ENCODE measurements at regions of chr17 and their contacts with region 1.

Region 1: DNA sequence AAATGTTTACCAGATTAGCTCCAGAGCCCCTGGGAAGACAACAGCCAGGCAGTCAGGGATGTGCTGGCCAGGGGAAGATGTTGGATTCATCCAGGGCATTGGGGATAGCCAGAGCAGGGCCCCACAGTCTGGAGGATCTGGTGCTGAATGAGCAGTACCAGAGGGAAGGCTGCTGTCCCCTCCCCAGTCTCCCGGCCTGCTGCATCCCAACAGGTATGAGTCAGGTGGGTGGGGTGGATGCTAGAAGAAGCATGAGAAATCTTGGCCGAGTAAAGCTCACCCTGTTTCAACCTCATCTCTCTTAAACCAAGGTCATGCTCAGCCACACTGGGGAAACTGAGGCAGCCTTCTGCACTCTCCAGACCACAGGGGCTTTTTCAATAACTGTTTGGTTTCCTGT is 71.9 kb upstream of the SEC14L1 start:
- DNase-seq: no peak
- H3K4me3 ChIP-seq: no peak overlapping the region
- H3K4me3 Mint-ChIP-seq: no peak overlapping the region
- H3K27ac Mint-ChIP-seq: no peak overlapping the region
- H3K4me1 ChIP-seq: no peaks in the 10 kb centered on the region
- H3K4me1 Mint-ChIP-seq: peaks cover 6% of the 10 kb centered on the region
- H3K27me3 ChIP-seq: 0 out of 2 replicates have a peak, but pooled peaks cover 1% of the 10 kb centered on the region
- H3K27me3 Mint-ChIP-seq: peaks cover 13% of the 10 kb centered on the region
- CTCF ChIP-seq: no peak

Region 2: DNA sequence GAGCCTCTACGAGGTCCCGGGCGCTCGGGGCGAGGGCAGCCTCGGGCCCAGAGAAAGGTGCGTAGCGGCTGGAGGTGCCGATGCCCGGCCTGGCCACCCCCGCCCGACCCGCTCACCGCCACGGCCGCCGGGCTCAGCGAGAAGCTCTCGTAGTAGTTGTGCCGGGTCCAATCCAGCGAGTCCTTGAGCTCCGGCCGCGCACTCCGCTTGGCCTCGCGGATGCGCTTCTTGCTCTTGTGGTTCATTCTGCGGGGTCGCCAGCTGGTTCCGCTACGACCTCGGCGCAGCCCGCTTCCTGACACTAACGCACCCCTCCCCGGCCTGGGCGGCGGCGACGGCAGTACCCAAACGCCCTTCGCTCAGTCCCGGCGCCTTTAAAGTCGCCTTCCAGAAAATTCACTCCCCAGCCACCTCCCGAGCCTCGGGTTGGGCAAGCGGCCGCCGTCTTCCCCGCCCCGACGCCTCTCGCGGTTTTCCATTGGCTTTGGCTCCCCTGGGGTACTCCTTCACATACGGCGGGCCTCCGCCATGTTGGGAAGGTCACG is 342.6 kb before region 1 on chr17 and contains the start of gene JMJD6:
- CTCF ChIA-PET with region 1: no interaction called
- POLR2A ChIA-PET with region 1: no interaction called
- intact Hi-C with region 1: loop called (anchors 1 kb)
- DNase-seq: peak; percentile 98
- H3K4me3 ChIP-seq: peak within 1 kb of the TSS; percentile 85
- H3K4me3 Mint-ChIP-seq: peak within 1 kb of the TSS; percentile 90
- H3K27ac Mint-ChIP-seq: peak within 1 kb of the TSS; percentile 84
- H3K4me1 ChIP-seq: peaks cover 7% of the 10 kb centered on the region; the same call in 1 of the 2 replicates
- H3K4me1 Mint-ChIP-seq: no peaks in the 10 kb centered on the region
- H3K27me3 ChIP-seq: no peaks in the 10 kb centered on the region
- H3K27me3 Mint-ChIP-seq: no peaks in the 10 kb centered on the region
- CTCF ChIP-seq: no peak
- total RNA-seq, gene JMJD6: 37.4 and 48.2 TPM in 2 replicates

Region 3: DNA sequence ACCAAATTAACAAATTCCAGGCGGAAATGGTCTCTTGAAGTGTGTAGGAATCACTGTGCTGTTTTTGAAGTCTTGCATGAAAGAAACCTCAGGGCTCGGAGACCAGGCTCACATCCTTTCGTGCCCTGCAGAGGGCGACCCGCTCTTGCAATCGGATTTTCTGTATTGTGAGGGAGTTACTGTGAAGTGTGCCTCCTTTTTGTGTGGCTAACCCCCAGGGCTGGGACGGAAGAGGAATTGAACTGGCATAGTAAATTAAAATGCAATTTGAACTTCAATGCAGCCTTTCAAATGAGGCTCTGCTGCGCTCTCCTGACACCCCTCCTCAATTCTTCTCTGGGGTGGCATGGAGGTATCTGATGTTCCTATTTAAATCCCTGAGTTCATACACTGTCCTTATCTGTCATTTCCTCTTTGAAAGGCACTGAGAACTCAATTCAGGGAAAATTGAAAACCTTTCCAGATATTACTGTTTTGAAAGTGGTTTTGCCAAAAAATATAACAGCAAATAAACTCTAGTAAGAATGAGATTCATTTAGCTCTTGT is 252.3 kb before region 1 on chr17:
- CTCF ChIA-PET with region 1: interaction called, 4 read pairs
- POLR2A ChIA-PET with region 1: no interaction called
- intact Hi-C with region 1: loop called (anchors 2 kb)
- DNase-seq: peak; percentile 59 to 60
- H3K4me3 ChIP-seq: no peak overlapping the region
- H3K4me3 Mint-ChIP-seq: no peak overlapping the region
- H3K27ac Mint-ChIP-seq: no peak overlapping the region
- H3K4me1 ChIP-seq: no peaks in the 10 kb centered on the region
- H3K4me1 Mint-ChIP-seq: no peaks in the 10 kb centered on the region
- H3K27me3 ChIP-seq: no peaks in the 10 kb centered on the region
- H3K27me3 Mint-ChIP-seq: no peaks in the 10 kb centered on the region
- CTCF ChIP-seq: peak; percentile 72 to 80

Region 4: DNA sequence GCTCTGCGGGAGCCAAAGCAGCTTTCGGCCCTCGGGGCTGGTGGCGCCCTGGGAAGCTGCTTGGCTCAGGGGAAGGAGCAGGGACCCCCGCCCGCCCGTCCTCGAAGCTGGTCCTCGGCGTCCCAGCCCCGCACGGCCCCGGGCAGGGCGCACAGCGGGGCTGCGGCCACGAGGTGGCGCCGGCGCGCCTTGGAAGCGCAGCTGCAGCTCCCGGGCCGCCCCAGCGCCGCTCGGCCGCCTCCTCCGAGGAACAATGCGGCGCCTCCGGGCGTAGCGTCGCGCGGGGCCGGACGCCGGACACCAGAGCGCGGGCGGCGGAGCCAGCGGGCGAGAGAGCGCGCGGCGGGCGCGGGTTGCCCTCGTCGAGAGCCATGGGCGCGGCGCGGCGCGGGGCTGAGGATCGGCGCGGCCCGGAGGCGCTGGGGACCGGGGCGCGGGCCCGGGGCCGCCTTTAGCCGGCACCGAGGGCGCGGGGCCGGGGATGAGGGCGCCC is 200.7 kb before region 1 on chr17 and contains the start of gene MGAT5B:
- CTCF ChIA-PET with region 1: interaction called, 12 read pairs
- POLR2A ChIA-PET with region 1: no interaction called
- intact Hi-C with region 1: loop called (anchors 1 kb)
- DNase-seq: peak; percentile 80 to 93
- H3K4me3 ChIP-seq: peak within 1 kb of the TSS; percentile 44
- H3K4me3 Mint-ChIP-seq: peak within 1 kb of the TSS; percentile 62
- H3K27ac Mint-ChIP-seq: no peak within 1 kb of the TSS
- H3K4me1 ChIP-seq: peaks cover 17% of the 10 kb centered on the region; the same call in 1 of the 2 replicates
- H3K4me1 Mint-ChIP-seq: peaks cover 13% of the 10 kb centered on the region
- H3K27me3 ChIP-seq: no peaks in the 10 kb centered on the region
- H3K27me3 Mint-ChIP-seq: no peaks in the 10 kb centered on the region
- CTCF ChIP-seq: peak; percentile 59 to 92
- total RNA-seq, gene MGAT5B: 8.9 and 9.1 TPM in 2 replicates

Region 5: DNA sequence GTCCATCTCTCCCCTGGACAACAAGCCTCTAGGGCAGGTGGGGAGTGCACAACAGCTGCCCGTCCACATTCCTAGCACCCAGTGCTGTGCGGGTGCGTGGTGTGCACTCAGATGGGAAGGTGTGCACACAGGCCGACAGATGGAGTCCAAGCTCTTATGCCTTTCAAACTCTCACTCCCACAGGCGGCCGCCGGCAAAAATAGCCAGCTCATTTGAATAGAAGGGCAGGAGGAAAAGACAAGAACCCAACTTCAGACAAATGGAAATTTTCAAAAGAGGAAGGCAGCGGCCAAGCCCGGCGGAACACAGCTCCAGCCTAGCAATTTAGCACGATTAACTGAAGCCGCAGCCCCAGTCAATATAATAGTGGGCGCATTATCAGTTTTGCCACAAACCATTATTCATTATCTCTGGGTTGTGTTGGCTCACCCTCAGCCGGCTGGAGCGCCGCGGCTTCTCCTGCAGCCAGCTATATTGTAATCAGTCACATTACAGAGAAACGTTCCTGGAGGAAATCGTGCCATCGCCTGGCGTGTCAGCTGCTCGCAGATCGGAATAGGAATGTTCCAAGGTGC is 32.0 kb before region 1 on chr17:
- CTCF ChIA-PET with region 1: interaction called, 19 read pairs
- POLR2A ChIA-PET with region 1: no interaction called
- intact Hi-C with region 1: no loop called
- DNase-seq: peak; percentile 70 to 75
- H3K4me3 ChIP-seq: no peak overlapping the region
- H3K4me3 Mint-ChIP-seq: peak overlapping the region; percentile 50
- H3K27ac Mint-ChIP-seq: no peak overlapping the region
- H3K4me1 ChIP-seq: no peaks in the 10 kb centered on the region
- H3K4me1 Mint-ChIP-seq: peaks cover 14% of the 10 kb centered on the region
- H3K27me3 ChIP-seq: no peaks in the 10 kb centered on the region
- H3K27me3 Mint-ChIP-seq: peaks cover 2% of the 10 kb centered on the region
- CTCF ChIP-seq: peak in 1 of 2 experiments; percentile 53

Measured in Caco-2 (cell line).